ENCODE measurements at regions of chr12 and their contacts with region 1.

Region 1: GRCh38 chr12:92928962-92929915 is at the start of gene EEA1:
- DNase-seq: peak; percentile 97
- H3K4me3 Mint-ChIP-seq: peak within 1 kb of the TSS; percentile 90
- H3K27ac Mint-ChIP-seq: peak within 1 kb of the TSS; percentile 93
- H3K4me1 Mint-ChIP-seq: peaks cover 28% of the 10 kb centered on the region
- H3K27me3 Mint-ChIP-seq: no peaks in the 10 kb centered on the region
- total RNA-seq, gene EEA1: 15.6 to 17.6 TPM

Region 2: GRCh38 chr12:91753649-91754048 is 1175.6 kb before region 1 on chr12:
- CTCF ChIA-PET with region 1: no interaction called
- intact Hi-C with region 1: no loop called
- DNase-seq: no peak
- H3K4me3 Mint-ChIP-seq: no peak overlapping the region
- H3K27ac Mint-ChIP-seq: no peak overlapping the region
- H3K4me1 Mint-ChIP-seq: peaks cover 3% of the 10 kb centered on the region
- H3K27me3 Mint-ChIP-seq: no peaks in the 10 kb centered on the region

Region 3: GRCh38 chr12:92145731-92146496 is 783.3 kb before region 1 on chr12 and contains the start of gene BTG1:
- CTCF ChIA-PET with region 1: no interaction called
- intact Hi-C with region 1: loop called (anchors 5 kb)
- DNase-seq: peak; percentile 100
- H3K4me3 Mint-ChIP-seq: peak within 1 kb of the TSS; percentile 100
- H3K27ac Mint-ChIP-seq: peak within 1 kb of the TSS; percentile 100
- H3K4me1 Mint-ChIP-seq: peaks cover 27% of the 10 kb centered on the region
- H3K27me3 Mint-ChIP-seq: no peaks in the 10 kb centered on the region
- total RNA-seq, gene BTG1: 218 to 223 TPM

Region 4: GRCh38 chr12:92827836-92828431 is 101.3 kb before region 1 on chr12:
- CTCF ChIA-PET with region 1: interaction called, 6 read pairs
- intact Hi-C with region 1: loop called (anchors 1 kb)
- DNase-seq: peak; percentile 56
- H3K4me3 Mint-ChIP-seq: no peak overlapping the region
- H3K27ac Mint-ChIP-seq: no peak overlapping the region
- H3K4me1 Mint-ChIP-seq: peaks cover 2% of the 10 kb centered on the region
- H3K27me3 Mint-ChIP-seq: no peaks in the 10 kb centered on the region

Region 5: GRCh38 chr12:93002293-93003054 is 73.2 kb after region 1 on chr12:
- CTCF ChIA-PET with region 1: no interaction called
- intact Hi-C with region 1: no loop called
- DNase-seq: no peak
- H3K4me3 Mint-ChIP-seq: no peak overlapping the region
- H3K27ac Mint-ChIP-seq: no peak overlapping the region
- H3K4me1 Mint-ChIP-seq: no peaks in the 10 kb centered on the region
- H3K27me3 Mint-ChIP-seq: no peaks in the 10 kb centered on the region

Region 6: GRCh38 chr12:93089805-93090569 is 160.7 kb after region 1 on chr12:
- CTCF ChIA-PET with region 1: no interaction called
- intact Hi-C with region 1: no loop called
- DNase-seq: peak; percentile 64
- H3K4me3 Mint-ChIP-seq: no peak overlapping the region
- H3K27ac Mint-ChIP-seq: peak overlapping the region; percentile 68
- H3K4me1 Mint-ChIP-seq: peaks cover 13% of the 10 kb centered on the region
- H3K27me3 Mint-ChIP-seq: no peaks in the 10 kb centered on the region

Region 7: GRCh38 chr12:93243689-93244513 is 314.7 kb after region 1 on chr12:
- CTCF ChIA-PET with region 1: no interaction called
- intact Hi-C with region 1: loop called (anchors 5 kb)
- DNase-seq: peak; percentile 53
- H3K4me3 Mint-ChIP-seq: peak overlapping the region; percentile 49
- H3K27ac Mint-ChIP-seq: peak overlapping the region; percentile 82
- H3K4me1 Mint-ChIP-seq: peaks cover 34% of the 10 kb centered on the region
- H3K27me3 Mint-ChIP-seq: no peaks in the 10 kb centered on the region

Region 8: GRCh38 chr12:93569656-93570551 is 640.7 kb after region 1 on chr12:
- CTCF ChIA-PET with region 1: no interaction called
- intact Hi-C with region 1: loop called (anchors 5 kb)
- DNase-seq: peak; percentile 88
- H3K4me3 Mint-ChIP-seq: peak overlapping the region; percentile 83
- H3K27ac Mint-ChIP-seq: peak overlapping the region; percentile 81
- H3K4me1 Mint-ChIP-seq: peaks cover 15% of the 10 kb centered on the region
- H3K27me3 Mint-ChIP-seq: peaks cover 17% of the 10 kb centered on the region

Region 9: GRCh38 chr12:94459728-94460615 is 1530.7 kb after region 1 on chr12 and contains the start of gene CEP83:
- CTCF ChIA-PET with region 1: no interaction called
- intact Hi-C with region 1: loop called (anchors 5 kb)
- DNase-seq: peak; percentile 98
- H3K4me3 Mint-ChIP-seq: peak within 1 kb of the TSS; percentile 97
- H3K27ac Mint-ChIP-seq: peak within 1 kb of the TSS; percentile 91
- H3K4me1 Mint-ChIP-seq: peaks cover 29% of the 10 kb centered on the region
- H3K27me3 Mint-ChIP-seq: peaks cover 5% of the 10 kb centered on the region
- total RNA-seq, gene CEP83: 19.0 to 21.5 TPM

Measured in activated naive CD4-positive, alpha-beta T cell treated with anti-CD3 and anti-CD28 coated beads for 36 hours (primary cell).